Ascending aorta (tissue), 2 donors: ENCODE measurements at regions of chr2 and their contacts with region 1.

Region 1: DNA sequence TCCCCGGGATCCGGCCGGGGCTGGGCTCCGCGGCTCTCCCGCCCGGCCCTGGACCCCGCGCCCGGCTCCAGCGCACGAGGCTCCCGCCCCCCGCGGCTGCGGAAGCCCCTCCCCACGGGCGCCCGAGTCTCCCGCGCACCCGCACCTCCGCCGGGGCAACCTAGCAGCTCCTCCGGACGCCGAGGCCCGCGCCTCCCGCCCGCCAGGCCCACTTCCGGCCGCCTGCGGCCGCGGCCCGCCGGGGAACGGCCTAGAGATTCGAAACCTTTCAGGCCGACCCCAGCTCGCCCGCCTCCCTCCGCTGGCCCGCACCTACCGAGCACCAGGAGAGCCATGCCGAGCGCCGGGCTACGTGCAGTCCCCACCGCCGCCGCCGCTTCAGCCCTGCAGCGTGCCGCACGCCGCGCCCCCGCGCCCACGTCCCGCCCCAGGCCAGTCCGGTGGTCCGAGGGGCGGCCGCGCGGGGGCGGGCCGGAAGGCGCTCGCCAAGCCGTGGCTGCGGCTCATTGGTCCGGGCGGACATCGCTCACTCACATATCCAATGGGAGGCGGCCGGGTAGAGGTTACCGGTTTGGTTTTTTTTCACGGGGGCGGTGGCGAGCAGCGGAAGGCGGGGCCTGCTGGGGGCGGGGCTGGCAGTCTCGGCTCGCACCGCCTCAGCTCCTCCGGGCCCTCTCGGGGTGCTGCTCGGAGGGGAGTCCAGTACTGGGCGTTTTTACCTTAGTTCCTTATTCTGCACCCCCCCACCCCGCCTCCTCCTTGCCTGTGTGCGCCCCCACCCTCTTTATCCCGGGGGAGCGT is at the start of gene PDIA6:
- DNase-seq: peak; percentile 89 to 98
- H3K4me3 ChIP-seq: peak within 1 kb of the TSS; percentile 68 to 74
- H3K27ac ChIP-seq: peak within 1 kb of the TSS; percentile 71 to 81
- H3K4me1 ChIP-seq: peaks cover 0 to 20% of the 10 kb centered on the region in 2 donors
- H3K27me3 ChIP-seq: no peaks in the 10 kb centered on the region
- CTCF ChIP-seq: peak in 1 of 3 experiments; percentile 43
- total RNA-seq, gene PDIA6: 56.4 TPM

Region 2: GRCh38 chr2:10302479-10303180 is 509.9 kb before region 1 on chr2 and contains the start of gene HPCAL1:
- intact Hi-C with region 1: loop called (anchors 5 kb)
- DNase-seq: peak; percentile 30 to 90
- H3K4me3 ChIP-seq: peak within 1 kb of the TSS; percentile 68 to 92
- H3K27ac ChIP-seq: peak within 1 kb of the TSS; percentile 78 to 84
- H3K4me1 ChIP-seq: peaks cover 0 to 6% of the 10 kb centered on the region in 2 donors
- H3K27me3 ChIP-seq: no peaks in the 10 kb centered on the region
- CTCF ChIP-seq: peak; percentile 50 to 70 (median 59)
- total RNA-seq, gene HPCAL1: 401 TPM

Region 3: DNA sequence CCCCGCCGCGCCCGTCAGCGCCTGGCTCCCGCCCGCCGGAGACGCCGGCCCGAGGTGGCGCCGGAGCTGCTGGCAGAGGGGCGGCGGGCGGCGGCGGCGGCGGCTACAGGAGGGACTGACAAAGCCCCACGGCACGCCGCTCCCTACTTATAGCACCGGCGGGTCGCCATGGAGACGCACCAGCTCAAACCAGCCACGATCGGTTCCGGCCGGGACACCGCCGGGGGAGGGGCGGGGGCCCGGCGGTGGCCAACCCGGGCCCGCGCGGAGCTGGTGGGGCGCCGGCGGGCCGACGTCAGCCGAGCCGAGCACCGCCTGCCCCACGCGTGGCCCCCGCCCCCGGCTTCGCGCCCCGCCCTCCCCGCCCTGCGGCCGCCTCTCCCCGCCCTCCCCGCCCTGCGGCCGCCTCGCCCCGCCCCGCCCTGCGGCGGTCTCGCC is 364.3 kb before region 1 on chr2 and contains the start of gene ODC1:
- intact Hi-C with region 1: loop called (anchors 5 kb)
- DNase-seq: peak; percentile 88 to 98
- H3K4me3 ChIP-seq: peak within 1 kb of the TSS; percentile 70 to 83
- H3K27ac ChIP-seq: peak within 1 kb of the TSS; percentile 92 to 96
- H3K4me1 ChIP-seq: peaks cover 7 to 33% of the 10 kb centered on the region in 2 donors
- H3K27me3 ChIP-seq: no peaks in the 10 kb centered on the region
- CTCF ChIP-seq: no peak
- total RNA-seq, gene ODC1: 82.8 TPM

Region 4: GRCh38 chr2:10717613-10718012 is 94.9 kb before region 1 on chr2:
- intact Hi-C with region 1: loop called (anchors 2 kb)
- DNase-seq: peak in 1 of 2 donors; percentile 78
- H3K4me3 ChIP-seq: no peak overlapping the region
- H3K27ac ChIP-seq: peak overlapping the region; percentile 65 to 71
- H3K4me1 ChIP-seq: peaks cover 13 to 31% of the 10 kb centered on the region in 2 donors
- H3K27me3 ChIP-seq: no peaks in the 10 kb centered on the region
- CTCF ChIP-seq: no peak

Region 5: GRCh38 chr2:11411768-11412448 is 599.3 kb after region 1 on chr2:
- intact Hi-C with region 1: loop called (anchors 5 kb)
- DNase-seq: peak in 1 of 2 donors; percentile 79
- H3K4me3 ChIP-seq: peak overlapping the region; percentile 44 to 59
- H3K27ac ChIP-seq: no peak overlapping the region
- H3K4me1 ChIP-seq: peaks cover 4 to 16% of the 10 kb centered on the region in 2 donors
- H3K27me3 ChIP-seq: no peaks in the 10 kb centered on the region
- CTCF ChIP-seq: peak; percentile 62 to 96 (median 83)